Panc1 (cell line): ENCODE measurements at regions of chr5 and their contacts with region 1.

Region 1: DNA sequence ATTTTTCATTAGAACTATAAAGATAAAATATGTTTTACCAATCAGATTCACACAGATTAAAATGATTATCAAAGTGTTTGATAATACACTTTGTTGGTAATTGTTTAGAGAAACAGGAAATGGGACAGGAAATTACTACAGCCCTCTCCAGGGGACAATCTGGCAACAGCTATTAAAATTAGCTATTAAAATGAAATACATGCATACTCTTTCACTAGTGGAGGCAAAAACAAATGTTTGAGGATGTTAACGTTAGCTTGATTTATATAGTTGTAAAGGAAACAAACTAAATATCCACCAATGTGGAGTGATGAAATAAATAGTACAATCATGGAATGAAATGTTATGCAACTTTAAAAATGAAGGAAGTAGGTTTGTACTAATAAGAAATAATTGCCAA is 53.7 kb downstream of the TARS1 start:
- DNase-seq: no peak
- ATAC-seq: no peak
- H3K4me3 ChIP-seq: no peak overlapping the region
- H3K27ac ChIP-seq: no peak overlapping the region
- H3K4me1 ChIP-seq: no peaks in the 10 kb centered on the region
- H3K27me3 ChIP-seq: no peaks in the 10 kb centered on the region
- CTCF ChIP-seq: no peak

Region 2: GRCh38 chr5:33840927-33841547 is 346.6 kb after region 1 on chr5:
- CTCF ChIA-PET with region 1: interaction called, 10 read pairs
- POLR2A ChIA-PET with region 1: no interaction called
- in situ Hi-C with region 1: no loop called
- intact Hi-C with region 1: no loop called
- DNase-seq: no peak
- ATAC-seq: no peak
- H3K4me3 ChIP-seq: no peak overlapping the region
- H3K27ac ChIP-seq: no peak overlapping the region
- H3K4me1 ChIP-seq: no peaks in the 10 kb centered on the region
- H3K27me3 ChIP-seq: no peaks in the 10 kb centered on the region
- CTCF ChIP-seq: no peak